ENCODE measurements at regions of chr10 and their contacts with region 1.

Region 1: DNA sequence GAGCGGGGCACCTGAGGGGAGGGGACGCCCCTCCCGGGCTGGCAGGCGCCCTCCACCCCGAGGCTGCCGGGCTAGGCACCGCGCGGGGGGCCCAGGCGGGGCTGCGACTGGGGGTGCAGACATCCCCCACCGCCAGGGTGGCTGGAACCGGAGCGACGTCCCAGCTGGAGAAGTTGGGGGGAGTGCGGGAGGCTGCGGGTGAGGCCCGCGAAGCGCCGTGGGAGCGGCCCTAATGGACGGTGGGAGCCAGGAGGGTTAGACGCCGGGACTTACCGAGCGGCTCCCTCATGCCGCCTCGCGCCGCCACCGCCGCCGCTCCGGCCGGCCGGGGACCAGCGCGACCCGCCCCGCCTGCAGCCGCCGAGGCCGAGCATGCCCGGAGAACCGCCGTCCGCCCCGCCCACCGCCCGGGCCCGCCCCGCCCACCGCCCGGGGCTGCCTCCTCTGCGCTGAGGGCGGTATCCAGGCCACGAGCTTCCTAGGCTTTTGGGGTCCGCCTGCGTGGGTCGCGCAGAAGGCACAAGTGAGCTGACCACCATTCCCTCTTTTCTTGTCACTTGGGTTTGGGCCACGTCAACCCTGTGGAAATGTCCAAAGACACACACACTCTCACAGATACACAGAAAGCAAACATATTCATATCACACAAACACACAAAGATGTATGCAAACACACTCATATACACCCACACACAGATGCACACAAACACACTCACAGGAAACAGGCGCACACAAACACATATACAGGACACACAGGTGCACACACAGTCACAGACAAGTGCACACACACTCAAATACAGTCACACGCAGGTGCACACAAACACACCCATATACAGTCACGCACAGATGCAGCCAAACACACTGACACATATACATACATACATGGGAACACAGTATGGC is at the start of gene JCAD:
- DNase-seq: peak in 1 of 2 donors; percentile 90
- H3K4me3 ChIP-seq: peak within 1 kb of the TSS; percentile 79 to 93
- H3K27ac ChIP-seq: peak within 1 kb of the TSS; percentile 94 to 95
- H3K4me1 ChIP-seq: peaks cover 3 to 20% of the 10 kb centered on the region in 2 donors
- H3K27me3 ChIP-seq: no peaks in the 10 kb centered on the region
- CTCF ChIP-seq: peak in 1 of 3 experiments; percentile 5
- total RNA-seq, gene JCAD: 82.8 TPM

Region 2: GRCh38 chr10:30018496-30018895 is 41.0 kb before region 1 on chr10:
- intact Hi-C with region 1: loop called (anchors 2 kb)
- DNase-seq: no peak
- H3K4me3 ChIP-seq: no peak overlapping the region
- H3K27ac ChIP-seq: peak overlapping the region; percentile 61 to 81
- H3K4me1 ChIP-seq: peaks cover 9 to 47% of the 10 kb centered on the region in 2 donors
- H3K27me3 ChIP-seq: no peaks in the 10 kb centered on the region
- CTCF ChIP-seq: peak in 2 of 3 experiments; percentile 21 to 34

Region 3: DNA sequence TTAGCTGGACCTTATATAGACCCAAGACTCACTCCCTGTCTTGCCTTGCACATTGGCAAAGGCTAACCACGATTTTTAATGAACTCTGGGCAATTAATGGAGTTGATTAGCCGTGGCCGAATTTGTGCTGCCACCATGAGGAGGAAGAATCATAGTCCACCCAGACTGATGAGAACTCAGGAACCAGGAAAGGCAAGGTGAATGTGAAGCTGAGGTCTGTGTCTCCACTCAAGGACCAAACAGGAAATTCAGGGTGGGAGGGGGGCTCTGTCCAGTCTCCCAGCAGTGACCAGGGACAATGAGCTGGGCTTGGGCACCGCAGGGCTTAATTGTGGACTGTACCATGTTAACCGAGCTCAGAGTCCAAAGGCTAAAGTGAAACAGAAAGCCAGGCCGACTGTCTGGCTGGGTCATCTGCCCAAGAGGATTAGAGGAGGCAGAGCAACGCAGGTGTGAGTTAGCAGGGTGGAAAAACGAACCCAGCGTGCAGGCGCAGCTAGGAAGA is 127.0 kb after region 1 on chr10:
- intact Hi-C with region 1: loop called (anchors 5 kb)
- DNase-seq: no peak
- H3K4me3 ChIP-seq: peak overlapping the region in 1 of 2 donors; percentile 1
- H3K27ac ChIP-seq: peak overlapping the region in 1 of 2 donors; percentile 15
- H3K4me1 ChIP-seq: peaks cover 6 to 39% of the 10 kb centered on the region in 2 donors
- H3K27me3 ChIP-seq: no peaks in the 10 kb centered on the region
- CTCF ChIP-seq: peak in 1 of 3 experiments; percentile 24

Region 4: DNA sequence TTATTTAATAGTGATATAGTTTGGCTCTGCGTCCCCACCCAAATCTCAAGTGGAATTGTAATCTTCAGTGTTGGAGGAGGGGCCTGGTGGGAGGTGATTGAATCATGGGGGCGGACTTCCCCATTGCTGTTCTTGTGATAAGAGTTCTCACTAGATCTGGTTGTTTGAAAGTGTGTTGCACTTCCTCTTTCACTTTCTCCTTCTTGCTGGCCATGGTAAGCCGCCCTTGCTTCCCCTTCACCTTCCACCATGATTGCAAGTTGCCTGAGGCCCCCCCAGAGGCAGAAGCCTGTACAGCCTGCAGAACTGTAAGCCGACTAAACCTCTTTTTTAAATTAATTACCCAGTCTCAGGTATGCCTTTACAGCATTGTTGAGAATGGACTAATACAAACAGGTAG is 188.2 kb after region 1 on chr10:
- intact Hi-C with region 1: loop called (anchors 10 kb)
- DNase-seq: no peak
- H3K4me3 ChIP-seq: no peak overlapping the region
- H3K27ac ChIP-seq: no peak overlapping the region
- H3K4me1 ChIP-seq: no peaks in the 10 kb centered on the region
- H3K27me3 ChIP-seq: no peaks in the 10 kb centered on the region
- CTCF ChIP-seq: no peak

Measured in ascending aorta (tissue), 2 donors.